Dendritic cell treated with granulocyte-macrophage colony-stimulating factor and Interleukin-4, amounts not matched to agents 40 ng/mL and 50 ng/mL, for 4 days (primary cell): ENCODE measurements at regions of chr18 and their contacts with region 1.

Region 1: DNA sequence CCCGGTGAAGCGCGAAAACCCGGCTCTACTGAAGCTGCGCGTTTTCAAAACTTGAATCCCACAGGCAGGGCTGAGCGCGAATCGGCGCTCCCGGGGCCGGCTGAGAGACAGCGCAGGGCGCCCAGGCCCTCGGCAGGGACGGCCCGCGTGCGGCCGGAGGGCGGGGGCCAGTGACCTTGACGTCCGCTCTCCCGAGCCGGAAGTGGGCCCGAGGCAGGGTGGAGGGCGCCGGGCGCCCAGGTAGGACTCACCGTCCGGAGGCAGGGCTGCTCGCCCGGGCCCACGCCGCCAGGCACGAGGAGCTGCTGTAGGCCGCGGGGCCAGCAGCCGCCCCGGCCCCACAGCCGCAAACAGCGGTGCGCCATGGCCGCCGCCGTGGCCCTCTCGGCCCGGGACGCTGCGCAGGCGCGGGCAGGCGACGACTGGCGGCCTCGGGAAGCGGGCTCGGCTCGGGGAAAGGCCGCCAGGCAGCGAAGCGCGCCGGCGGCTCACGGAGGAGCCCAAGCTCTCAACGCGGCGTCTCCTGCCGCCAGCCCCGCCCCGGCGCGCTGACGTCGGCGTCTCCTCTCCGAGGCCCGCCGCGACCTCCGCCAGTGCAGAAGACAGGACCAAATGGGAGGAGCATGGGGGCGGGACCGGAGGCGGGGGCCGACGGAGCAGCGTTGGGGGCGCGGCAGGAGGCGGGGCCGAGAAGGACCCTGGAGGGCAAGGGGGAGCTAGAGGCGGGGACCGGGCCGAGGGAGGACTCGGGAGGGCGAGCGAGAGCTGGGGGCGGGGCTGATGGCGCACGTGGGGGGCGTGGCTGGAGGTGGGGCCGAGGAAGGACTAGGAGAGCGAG is at the start of gene AFG3L2:
- H3K4me3 Mint-ChIP-seq: peak within 1 kb of the TSS; percentile 80
- H3K27ac Mint-ChIP-seq: peak within 1 kb of the TSS; percentile 87
- H3K4me1 Mint-ChIP-seq: peaks cover 54% of the 10 kb centered on the region
- H3K27me3 Mint-ChIP-seq: no peaks in the 10 kb centered on the region

Region 2: GRCh38 chr18:12308386-12309100 is 68.4 kb before region 1 on chr18:
- intact Hi-C with region 1: loop called (anchors 2 kb)
- H3K4me3 Mint-ChIP-seq: peak overlapping the region; percentile 77
- H3K27ac Mint-ChIP-seq: peak overlapping the region; percentile 91
- H3K4me1 Mint-ChIP-seq: peaks cover 49% of the 10 kb centered on the region
- H3K27me3 Mint-ChIP-seq: peaks cover 24% of the 10 kb centered on the region

Region 3: DNA sequence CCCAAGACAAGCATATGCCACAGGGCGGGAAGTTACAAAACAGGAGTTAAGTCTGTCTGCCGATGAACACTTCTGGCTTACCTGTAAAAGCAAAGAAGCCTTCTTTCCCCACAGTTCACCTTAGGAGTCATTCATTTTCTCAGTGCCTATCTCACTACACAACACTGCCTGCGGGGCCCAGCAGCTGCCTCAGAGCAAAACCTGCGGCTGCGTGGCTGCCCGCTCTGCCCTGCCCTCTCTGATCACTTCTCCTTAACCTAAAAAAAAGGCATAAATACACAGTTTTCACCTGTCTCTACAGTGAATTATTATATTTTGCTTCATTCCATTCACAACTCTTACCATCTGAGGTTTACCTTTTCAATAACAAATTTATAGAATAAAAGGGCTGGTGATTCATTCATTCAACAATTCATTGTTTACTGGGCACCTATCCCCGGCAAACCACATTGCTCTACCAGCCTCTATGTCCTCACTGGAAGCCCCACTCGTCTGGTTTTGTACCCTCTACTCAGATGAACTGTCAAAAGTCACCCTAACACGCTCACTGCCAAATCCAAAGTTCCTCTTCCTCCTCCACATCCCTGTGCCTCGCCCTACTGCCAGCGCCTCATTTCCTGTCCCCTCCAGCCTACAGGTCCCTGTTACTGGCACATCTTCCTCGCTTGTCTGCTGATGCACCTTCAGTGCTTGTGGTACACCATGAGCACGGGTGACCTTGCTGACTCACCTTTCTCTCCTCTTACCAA is 31.3 kb before region 1 on chr18:
- intact Hi-C with region 1: loop called (anchors 2 kb)
- H3K4me3 Mint-ChIP-seq: no peak overlapping the region
- H3K27ac Mint-ChIP-seq: peak overlapping the region; percentile 56
- H3K4me1 Mint-ChIP-seq: peaks cover 24% of the 10 kb centered on the region
- H3K27me3 Mint-ChIP-seq: no peaks in the 10 kb centered on the region

Region 4: DNA sequence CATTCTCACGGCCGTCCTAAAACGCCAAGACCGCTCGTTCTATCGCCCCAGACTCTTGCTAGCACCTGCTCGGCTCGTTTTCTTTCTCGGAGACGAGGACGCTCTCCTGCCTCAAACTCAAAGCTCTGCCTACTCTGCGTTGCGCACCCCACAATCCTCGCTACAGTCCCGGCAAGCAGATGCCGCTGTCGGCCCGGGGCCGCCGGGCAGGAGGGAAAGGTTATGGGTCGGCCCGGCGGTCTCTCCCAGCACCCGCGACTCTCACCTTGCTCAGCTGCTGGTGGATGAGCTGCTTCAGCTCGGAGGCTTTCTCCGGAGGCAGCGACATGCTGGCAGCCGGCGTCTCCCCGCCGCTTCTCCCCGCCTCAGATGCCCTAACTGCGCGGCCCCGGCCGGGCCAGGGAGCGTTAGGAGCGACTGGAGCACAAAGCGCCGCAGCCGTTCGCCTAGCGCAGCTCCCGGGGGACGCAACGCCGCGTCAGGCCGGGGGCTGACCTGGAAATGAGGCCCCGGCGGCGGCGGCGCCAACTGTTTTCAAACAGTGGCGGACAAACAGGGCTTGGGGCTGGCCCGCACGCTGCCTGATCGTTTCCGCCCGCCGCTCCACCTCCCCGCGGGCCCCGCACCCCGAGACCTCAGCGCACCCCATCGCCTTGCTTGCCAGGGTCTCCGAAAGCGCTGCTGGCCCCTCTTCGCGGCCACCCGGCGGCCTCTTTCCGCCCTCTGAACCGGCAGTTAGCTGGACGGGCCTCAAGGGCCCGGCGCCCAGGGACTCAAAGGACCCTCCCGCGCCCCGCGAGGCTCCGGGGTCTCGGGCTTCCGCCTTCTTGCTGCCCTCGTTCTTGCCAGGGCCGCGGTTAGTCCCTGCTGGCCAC is 325.5 kb after region 1 on chr18 and contains the starts of genes CEP76 and PSMG2:
- intact Hi-C with region 1: loop called (anchors 2 kb)
- H3K4me3 Mint-ChIP-seq: peak within 1 kb of the TSS; percentile 89
- H3K27ac Mint-ChIP-seq: peak within 1 kb of the TSS; percentile 100
- H3K4me1 Mint-ChIP-seq: peaks cover 37% of the 10 kb centered on the region
- H3K27me3 Mint-ChIP-seq: no peaks in the 10 kb centered on the region